Activated CD8-positive, alpha-beta T cell treated with anti-CD3 and anti-CD28 coated beads for 36 hours (primary cell): ENCODE measurements at regions of chr1 and their contacts with region 1.

Region 1: GRCh38 chr1:193121616-193122593 is at the start of gene CDC73:
- DNase-seq: peak; percentile 98
- ATAC-seq: peak; percentile 94
- H3K4me3 Mint-ChIP-seq: peak within 1 kb of the TSS; percentile 87
- H3K27ac Mint-ChIP-seq: peak within 1 kb of the TSS; percentile 98
- H3K4me1 Mint-ChIP-seq: peaks cover 30% of the 10 kb centered on the region
- H3K27me3 Mint-ChIP-seq: no peaks in the 10 kb centered on the region
- CTCF ChIP-seq: peak; percentile 95
- total RNA-seq, gene CDC73: 45.1 to 50.2 TPM

Region 2: DNA sequence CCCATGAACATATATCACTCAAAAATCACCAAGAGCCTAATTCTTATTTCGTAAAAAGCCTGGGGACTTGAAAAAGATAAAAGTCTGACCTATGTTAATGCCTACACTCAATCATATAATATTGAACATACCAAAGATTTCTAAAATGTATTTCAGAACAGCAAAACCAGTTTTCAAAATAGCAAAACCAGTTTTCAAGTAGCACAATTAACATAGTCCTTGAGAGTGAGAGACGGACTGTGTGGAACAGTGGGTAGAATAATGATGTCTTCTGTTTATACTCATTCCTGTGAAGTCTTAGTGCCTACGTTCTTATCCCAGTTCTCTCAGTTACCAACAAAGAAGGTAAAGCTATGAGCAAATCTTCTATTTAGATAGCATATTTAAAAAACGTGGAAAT is 335.3 kb before region 1 on chr1:
- CTCF ChIA-PET with region 1: no interaction called
- POLR2A ChIA-PET with region 1: no interaction called
- intact Hi-C with region 1: no loop called
- DNase-seq: no peak
- ATAC-seq: no peak
- H3K4me3 Mint-ChIP-seq: no peak overlapping the region
- H3K27ac Mint-ChIP-seq: no peak overlapping the region
- H3K4me1 Mint-ChIP-seq: no peaks in the 10 kb centered on the region
- H3K27me3 Mint-ChIP-seq: peaks cover 15% of the 10 kb centered on the region
- CTCF ChIP-seq: no peak

Region 3: GRCh38 chr1:192808518-192809306 is 313.2 kb before region 1 on chr1 and contains the start of gene RGS2:
- CTCF ChIA-PET with region 1: no interaction called
- POLR2A ChIA-PET with region 1: interaction called, 4 read pairs
- intact Hi-C with region 1: loop called (anchors 5 kb)
- DNase-seq: peak; percentile 89
- ATAC-seq: peak; percentile 95
- H3K4me3 Mint-ChIP-seq: peak within 1 kb of the TSS; percentile 89
- H3K27ac Mint-ChIP-seq: peak within 1 kb of the TSS; percentile 93
- H3K4me1 Mint-ChIP-seq: peaks cover 29% of the 10 kb centered on the region
- H3K27me3 Mint-ChIP-seq: peaks cover 1% of the 10 kb centered on the region
- CTCF ChIP-seq: no peak
- total RNA-seq, gene RGS2: 5.7 to 6.3 TPM

Region 4: GRCh38 chr1:193059268-193060225 is 62.4 kb before region 1 on chr1 and contains the starts of genes RO60 and UCHL5:
- CTCF ChIA-PET with region 1: interaction called, 9 read pairs
- POLR2A ChIA-PET with region 1: interaction called, 21 read pairs
- intact Hi-C with region 1: loop called (anchors 2 kb)
- DNase-seq: peak; percentile 97
- ATAC-seq: peak; percentile 93
- H3K4me3 Mint-ChIP-seq: peak within 1 kb of the TSS; percentile 94
- H3K27ac Mint-ChIP-seq: peak within 1 kb of the TSS; percentile 92
- H3K4me1 Mint-ChIP-seq: peaks cover 52% of the 10 kb centered on the region
- H3K27me3 Mint-ChIP-seq: no peaks in the 10 kb centered on the region
- CTCF ChIP-seq: no peak
- total RNA-seq, gene RO60: 56.2 to 63.4 TPM
- total RNA-seq, gene UCHL5: 81.3 to 85.7 TPM

Region 5: DNA sequence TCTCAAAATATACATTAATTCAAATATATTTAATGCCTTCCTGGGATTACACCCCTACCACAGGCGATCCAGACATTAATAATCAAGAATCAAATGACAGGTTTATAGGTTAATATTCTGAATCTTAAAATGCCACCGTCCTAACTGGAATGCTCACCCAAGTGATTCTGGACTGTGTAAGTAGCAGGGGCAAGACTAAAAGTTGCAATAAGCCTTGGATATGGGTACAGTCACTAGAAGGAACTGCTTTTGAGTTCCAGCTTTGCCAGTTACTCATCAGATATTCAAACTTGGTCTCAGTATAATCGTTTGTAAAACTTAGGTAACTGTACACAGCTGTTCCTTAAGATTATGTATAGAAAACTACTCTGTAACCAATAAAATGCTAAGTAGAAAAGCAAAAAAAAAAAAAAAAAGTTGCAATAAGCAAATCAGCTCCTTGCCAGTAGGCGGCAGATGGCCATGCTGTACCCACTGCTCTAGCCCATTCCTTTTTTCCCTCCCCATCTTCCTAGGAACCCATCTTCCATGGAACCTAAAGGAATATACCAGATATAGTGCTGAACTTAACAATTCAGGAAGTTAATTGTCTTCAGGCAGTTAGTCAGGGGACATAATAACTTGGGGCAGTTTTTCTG is 52.0 kb before region 1 on chr1:
- CTCF ChIA-PET with region 1: interaction called, 10 read pairs
- POLR2A ChIA-PET with region 1: no interaction called
- intact Hi-C with region 1: no loop called
- DNase-seq: no peak
- ATAC-seq: peak; percentile 40
- H3K4me3 Mint-ChIP-seq: no peak overlapping the region
- H3K27ac Mint-ChIP-seq: peak overlapping the region; percentile 84
- H3K4me1 Mint-ChIP-seq: peaks cover 44% of the 10 kb centered on the region
- H3K27me3 Mint-ChIP-seq: no peaks in the 10 kb centered on the region
- CTCF ChIP-seq: peak; percentile 36

Region 6: DNA sequence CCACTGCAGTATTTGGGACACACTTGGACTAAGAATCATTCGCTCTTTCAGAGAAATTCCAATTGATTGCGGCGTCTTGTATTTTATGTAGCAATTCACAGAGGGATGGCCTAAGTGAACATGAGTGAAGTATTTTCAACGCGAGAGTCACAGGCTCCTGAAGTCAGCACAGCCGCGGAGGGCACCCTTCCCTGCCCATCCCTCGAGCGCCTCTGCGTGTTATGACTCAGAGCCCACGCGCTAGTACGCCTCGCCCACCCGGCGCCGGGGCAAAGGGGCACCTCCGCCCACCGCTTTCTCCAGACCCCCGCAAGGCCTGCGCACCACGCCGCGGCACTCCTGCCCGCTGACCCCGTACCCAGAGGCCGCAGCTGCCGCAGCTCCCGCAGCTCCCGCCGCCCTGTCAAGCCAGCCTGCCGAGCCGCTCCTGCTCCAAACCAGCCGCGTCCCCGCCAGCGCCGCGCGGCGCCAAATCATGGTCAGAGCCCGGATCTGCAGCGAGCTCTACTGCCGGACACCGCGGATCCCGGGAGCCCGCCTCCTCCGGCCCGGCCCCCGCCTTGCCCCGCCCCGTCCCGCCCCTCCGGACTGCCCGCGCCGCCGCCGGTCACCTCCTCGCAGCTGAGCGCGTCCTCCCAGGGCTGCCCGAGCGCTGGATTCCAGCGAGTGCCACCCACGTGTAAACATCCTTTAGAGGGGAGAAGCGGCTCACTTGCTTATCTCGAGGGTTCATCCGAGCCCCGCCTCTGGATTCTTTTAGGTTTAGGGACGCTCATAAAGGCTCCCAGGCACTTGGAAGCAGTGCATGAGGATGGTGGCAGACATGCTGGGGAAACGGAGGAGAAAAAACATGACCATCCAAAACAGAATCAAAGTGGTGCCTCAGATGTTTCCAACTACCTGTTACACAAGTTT is 16.7 kb before region 1 on chr1 and contains the start of gene GLRX2:
- CTCF ChIA-PET with region 1: interaction called, 8 read pairs
- POLR2A ChIA-PET with region 1: interaction called, 4 read pairs
- intact Hi-C with region 1: loop called (anchors 2 kb)
- DNase-seq: peak; percentile 73
- ATAC-seq: peak; percentile 89
- H3K4me3 Mint-ChIP-seq: peak within 1 kb of the TSS; percentile 95
- H3K27ac Mint-ChIP-seq: peak within 1 kb of the TSS; percentile 76
- H3K4me1 Mint-ChIP-seq: peaks cover 18% of the 10 kb centered on the region
- H3K27me3 Mint-ChIP-seq: no peaks in the 10 kb centered on the region
- CTCF ChIP-seq: no peak
- total RNA-seq, gene GLRX2: 24.3 to 29.5 TPM

Region 7: GRCh38 chr1:193338194-193338593 is 216.3 kb after region 1 on chr1:
- CTCF ChIA-PET with region 1: no interaction called
- POLR2A ChIA-PET with region 1: no interaction called
- intact Hi-C with region 1: no loop called
- DNase-seq: no peak
- ATAC-seq: peak; percentile 27
- H3K4me3 Mint-ChIP-seq: no peak overlapping the region
- H3K27ac Mint-ChIP-seq: no peak overlapping the region
- H3K4me1 Mint-ChIP-seq: peaks cover 6% of the 10 kb centered on the region
- H3K27me3 Mint-ChIP-seq: peaks cover 2% of the 10 kb centered on the region
- CTCF ChIP-seq: no peak